ENCODE measurements at regions of chr14 and their contacts with region 1.

Region 1: DNA sequence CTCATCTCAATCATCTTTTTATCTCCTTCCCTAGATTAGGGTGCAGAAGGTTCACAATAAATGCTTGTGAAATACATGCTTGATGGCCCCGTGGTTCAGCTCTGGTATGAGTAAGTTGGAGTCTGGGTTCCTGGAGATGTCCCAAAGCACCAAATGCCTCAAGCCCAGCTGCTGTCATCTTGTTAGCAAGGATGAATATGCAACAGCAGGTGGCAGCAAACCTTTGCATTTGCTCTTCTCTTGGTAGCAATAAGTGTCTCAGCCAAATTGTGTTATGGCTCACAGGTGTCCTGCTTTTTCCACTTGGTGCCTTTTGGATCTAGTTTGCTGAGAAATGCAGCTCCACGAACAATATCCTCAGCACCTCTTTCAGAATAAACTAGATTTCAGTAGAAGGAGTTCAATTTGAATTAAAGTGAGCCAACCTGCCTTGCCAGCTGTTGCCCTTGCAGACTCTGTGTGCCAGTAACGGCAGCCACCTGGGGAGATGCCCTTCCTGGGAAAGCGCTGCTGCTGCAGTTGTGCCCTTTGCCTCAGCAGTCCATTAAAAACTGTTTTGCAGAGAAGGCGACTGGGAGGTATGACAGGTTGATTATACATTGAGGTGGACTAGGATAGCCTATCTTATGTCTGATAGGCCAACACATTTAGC is 417.3 kb downstream of the SNAPC1 start:
- DNase-seq: peak; percentile 72
- H3K4me3 ChIP-seq: no peak overlapping the region
- H3K27ac ChIP-seq: no peak overlapping the region
- H3K4me1 ChIP-seq: no peaks in the 10 kb centered on the region
- H3K27me3 ChIP-seq: peaks cover 6 to 8% of the 10 kb centered on the region in 2 experiments
- CTCF ChIP-seq: peak; percentile 50 to 62
- POLR2A ChIP-seq: no peak

Region 2: GRCh38 chr14:61965030-61965745 is 214.3 kb before region 1 on chr14:
- CTCF ChIA-PET with region 1: no interaction called
- POLR2A ChIA-PET with region 1: no interaction called
- dilution Hi-C with region 1: no loop called
- intact Hi-C with region 1: no loop called
- DNase-seq: no peak
- H3K4me3 ChIP-seq: no peak overlapping the region
- H3K27ac ChIP-seq: no peak overlapping the region
- H3K4me1 ChIP-seq: no peaks in the 10 kb centered on the region
- H3K27me3 ChIP-seq: no peaks in the 10 kb centered on the region
- CTCF ChIP-seq: no peak
- POLR2A ChIP-seq: no peak

Region 3: DNA sequence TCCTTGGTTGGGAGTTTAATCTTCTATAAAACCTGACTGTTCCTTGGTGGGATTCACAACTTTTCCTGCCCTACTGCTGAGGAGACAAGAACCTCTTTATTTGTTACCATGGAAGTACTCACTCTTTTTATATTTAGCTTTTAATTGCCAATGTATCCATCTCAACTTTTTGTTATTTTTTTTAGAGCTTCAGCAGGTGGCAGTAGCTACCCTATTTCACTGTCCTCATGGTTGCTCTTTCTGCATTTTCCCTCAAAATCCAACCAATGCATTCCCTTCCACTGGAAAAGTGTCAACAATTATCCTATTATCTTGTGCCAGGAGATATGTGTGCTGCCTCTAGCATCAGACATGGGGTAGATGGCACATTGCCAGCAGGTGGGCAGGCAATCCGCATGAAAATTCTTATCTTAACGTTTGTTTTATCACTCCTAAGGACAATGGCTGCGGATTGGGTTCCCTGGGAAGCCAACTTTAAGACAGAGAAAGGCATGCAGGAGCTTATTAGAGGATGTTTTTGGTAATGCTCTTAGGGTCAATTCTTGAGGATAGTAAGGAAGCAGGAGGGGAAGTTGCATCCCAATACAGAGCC is 10.8 kb before region 1 on chr14:
- CTCF ChIA-PET with region 1: interaction called, 11 read pairs
- POLR2A ChIA-PET with region 1: no interaction called
- dilution Hi-C with region 1: no loop called
- intact Hi-C with region 1: no loop called
- DNase-seq: no peak
- H3K4me3 ChIP-seq: no peak overlapping the region
- H3K27ac ChIP-seq: no peak overlapping the region
- H3K4me1 ChIP-seq: no peaks in the 10 kb centered on the region
- H3K27me3 ChIP-seq: peaks cover 2 to 3% of the 10 kb centered on the region in 2 experiments
- CTCF ChIP-seq: no peak
- POLR2A ChIP-seq: no peak

Region 4: GRCh38 chr14:63039800-63040380 is 860.4 kb after region 1 on chr14:
- CTCF ChIA-PET with region 1: interaction called, 9 read pairs
- POLR2A ChIA-PET with region 1: no interaction called
- dilution Hi-C with region 1: no loop called
- intact Hi-C with region 1: loop called (anchors 2 kb)
- DNase-seq: peak; percentile 66
- H3K4me3 ChIP-seq: no peak overlapping the region
- H3K27ac ChIP-seq: no peak overlapping the region
- H3K4me1 ChIP-seq: peaks cover 2% of the 10 kb centered on the region
- H3K27me3 ChIP-seq: peaks cover 33 to 58% of the 10 kb centered on the region in 2 experiments
- CTCF ChIP-seq: peak in 1 of 2 donors; percentile 24
- POLR2A ChIP-seq: no peak

Region 5: DNA sequence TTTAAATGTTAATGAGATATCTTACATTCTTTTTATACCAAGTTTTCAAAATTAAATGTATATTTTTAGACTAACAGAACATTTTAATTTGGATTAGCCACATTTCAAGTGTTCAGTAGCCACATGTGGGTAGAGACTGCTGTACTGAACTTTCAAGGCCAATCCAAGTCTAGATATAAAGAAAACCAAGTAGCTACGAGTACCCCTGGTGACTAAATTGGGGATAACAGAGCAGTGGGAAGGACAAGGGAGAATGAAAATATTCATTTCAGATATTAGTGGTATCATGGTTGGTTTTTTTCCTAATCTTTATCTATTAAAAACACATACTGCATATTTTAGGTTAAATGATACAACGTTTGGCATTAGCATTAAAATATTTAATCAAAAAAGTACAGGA is 955.3 kb after region 1 on chr14:
- CTCF ChIA-PET with region 1: interaction called, 3 read pairs
- POLR2A ChIA-PET with region 1: no interaction called
- dilution Hi-C with region 1: no loop called
- intact Hi-C with region 1: loop called (anchors 2 kb)
- DNase-seq: peak; percentile 15
- H3K4me3 ChIP-seq: no peak overlapping the region
- H3K27ac ChIP-seq: no peak overlapping the region
- H3K4me1 ChIP-seq: no peaks in the 10 kb centered on the region
- H3K27me3 ChIP-seq: peaks cover 0 to 2% of the 10 kb centered on the region in 2 experiments
- CTCF ChIP-seq: peak in 1 of 2 donors; percentile 11
- POLR2A ChIP-seq: no peak

Region 6: DNA sequence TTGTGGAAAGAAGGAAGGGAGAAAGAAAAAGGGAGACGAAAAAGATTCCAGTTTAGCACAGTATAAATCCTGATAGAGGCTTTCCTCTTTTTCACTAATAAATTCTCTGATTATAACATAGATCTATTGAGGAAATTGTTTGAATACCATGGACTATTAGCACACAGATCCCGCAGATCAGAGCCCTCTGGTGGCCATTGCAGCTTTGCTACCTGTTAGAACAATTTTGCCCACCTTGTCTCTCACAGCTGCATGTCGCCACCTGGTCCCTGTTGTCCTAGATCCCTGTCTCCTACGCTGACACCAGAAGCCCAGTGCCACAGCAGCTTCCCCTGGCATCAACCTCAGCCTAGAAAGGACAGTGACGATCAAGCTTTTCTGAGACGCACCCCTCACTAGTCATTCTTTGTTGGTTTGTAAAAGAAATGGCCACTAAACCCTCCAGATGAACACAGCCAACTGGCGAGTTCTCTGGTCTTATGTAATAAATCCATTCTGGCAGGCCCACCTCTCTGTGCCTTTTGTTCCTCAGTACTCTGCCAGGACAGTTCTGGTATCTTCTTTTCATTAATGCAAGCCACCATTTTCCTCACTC is 1129.3 kb after region 1 on chr14:
- CTCF ChIA-PET with region 1: interaction called, 24 read pairs
- POLR2A ChIA-PET with region 1: no interaction called
- dilution Hi-C with region 1: no loop called
- intact Hi-C with region 1: loop called (anchors 5 kb)
- DNase-seq: peak; percentile 57
- H3K4me3 ChIP-seq: no peak overlapping the region
- H3K27ac ChIP-seq: no peak overlapping the region
- H3K4me1 ChIP-seq: no peaks in the 10 kb centered on the region
- H3K27me3 ChIP-seq: peaks cover 6 to 16% of the 10 kb centered on the region in 2 experiments
- CTCF ChIP-seq: peak; percentile 64 to 74
- POLR2A ChIP-seq: no peak

Region 7: GRCh38 chr14:63375771-63376170 is 1196.3 kb after region 1 on chr14:
- CTCF ChIA-PET with region 1: interaction called, 13 read pairs
- POLR2A ChIA-PET with region 1: no interaction called
- dilution Hi-C with region 1: no loop called
- intact Hi-C with region 1: loop called (anchors 10 kb)
- DNase-seq: no peak
- H3K4me3 ChIP-seq: no peak overlapping the region
- H3K27ac ChIP-seq: no peak overlapping the region
- H3K4me1 ChIP-seq: no peaks in the 10 kb centered on the region
- H3K27me3 ChIP-seq: no peaks in the 10 kb centered on the region
- CTCF ChIP-seq: no peak
- POLR2A ChIP-seq: no peak

Measured in endothelial cell of umbilical vein (primary cell).